Dorsolateral prefrontal cortex (tissue), 120 donors: ENCODE measurements at regions of chrX and their contacts with region 1.

Region 1: GRCh38 chrX:135003876-135004623 is 13.3 kb downstream of the SMIM10 start:
- DNase-seq: peak; percentile 80 to 93 (median 90)
- H3K4me3 ChIP-seq: peak overlapping the region; percentile 25 to 73 (median 57)
- H3K27ac ChIP-seq: peak overlapping the region in 26 of 59 donors; percentile 1 to 76 (median 43)
- H3K27me3 ChIP-seq: peaks cover 0 to 73% (median 10%) of the 10 kb centered on the region in 45 donors
- CTCF ChIP-seq: peak in 4 of 56 donors; percentile 9 to 24 (median 19)

Region 2: GRCh38 chrX:134969726-134970125 is 34.3 kb before region 1 on chrX:
- intact Hi-C with region 1: loop called (anchors 2 to 5 kb)
- DNase-seq: no peak
- H3K4me3 ChIP-seq: no peak overlapping the region
- H3K27ac ChIP-seq: no peak overlapping the region
- H3K27me3 ChIP-seq: peaks cover 0 to 41% (median 7%) of the 10 kb centered on the region in 45 donors
- CTCF ChIP-seq: no peak

Region 3: GRCh38 chrX:135024526-135024925 is 20.5 kb after region 1 on chrX:
- intact Hi-C with region 1: loop called in 1 of 2 experiments (anchors 1 kb)
- DNase-seq: no peak
- H3K4me3 ChIP-seq: no peak overlapping the region
- H3K27ac ChIP-seq: no peak overlapping the region
- H3K27me3 ChIP-seq: peaks cover 0 to 43% (median 5%) of the 10 kb centered on the region in 45 donors
- CTCF ChIP-seq: no peak

Region 4: GRCh38 chrX:135050603-135051002 is 46.6 kb after region 1 on chrX:
- intact Hi-C with region 1: loop called in 1 of 2 experiments (anchors 5 kb)
- DNase-seq: no peak
- H3K4me3 ChIP-seq: peak overlapping the region in 57 of 59 donors; percentile 49 to 76 (median 63)
- H3K27ac ChIP-seq: peak overlapping the region in 9 of 59 donors; percentile 43 to 86 (median 77)
- H3K27me3 ChIP-seq: peaks cover 0 to 45% (median 12%) of the 10 kb centered on the region in 45 donors
- CTCF ChIP-seq: no peak

Region 5: DNA sequence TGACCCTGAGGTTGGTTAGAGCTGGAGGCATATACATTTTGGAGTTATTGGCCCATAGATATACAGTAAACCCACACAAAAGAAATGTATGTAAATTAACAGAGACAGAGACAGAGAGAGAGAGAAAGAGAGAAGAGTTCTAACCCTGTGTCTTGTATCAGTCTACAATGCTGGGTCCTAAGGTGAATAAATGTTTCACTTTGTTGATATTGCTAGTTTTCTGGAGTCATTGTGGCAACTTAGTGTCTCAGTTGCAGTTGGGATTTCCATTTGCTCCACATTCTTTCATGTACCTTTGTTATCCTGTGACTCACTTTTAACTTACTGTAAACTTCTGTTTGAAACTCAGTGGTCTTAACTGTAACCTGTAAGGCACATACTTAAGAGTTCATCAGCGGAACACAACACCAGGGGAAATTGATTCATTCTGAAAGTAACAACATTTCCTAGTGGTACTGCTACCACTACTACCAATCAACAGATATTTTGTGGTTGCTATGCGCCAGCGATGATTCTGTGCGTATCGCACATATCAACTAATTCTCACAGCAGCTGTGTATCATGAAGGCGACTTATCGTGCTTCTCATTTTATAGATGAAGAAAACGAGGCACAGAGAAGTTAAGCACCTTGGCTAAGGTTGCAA is 209.3 kb after region 1 on chrX:
- intact Hi-C with region 1: no loop called
- DNase-seq: no peak
- H3K4me3 ChIP-seq: no peak overlapping the region
- H3K27ac ChIP-seq: no peak overlapping the region
- H3K27me3 ChIP-seq: peaks cover 0 to 46% (median 8%) of the 10 kb centered on the region in 45 donors
- CTCF ChIP-seq: no peak

Region 6: DNA sequence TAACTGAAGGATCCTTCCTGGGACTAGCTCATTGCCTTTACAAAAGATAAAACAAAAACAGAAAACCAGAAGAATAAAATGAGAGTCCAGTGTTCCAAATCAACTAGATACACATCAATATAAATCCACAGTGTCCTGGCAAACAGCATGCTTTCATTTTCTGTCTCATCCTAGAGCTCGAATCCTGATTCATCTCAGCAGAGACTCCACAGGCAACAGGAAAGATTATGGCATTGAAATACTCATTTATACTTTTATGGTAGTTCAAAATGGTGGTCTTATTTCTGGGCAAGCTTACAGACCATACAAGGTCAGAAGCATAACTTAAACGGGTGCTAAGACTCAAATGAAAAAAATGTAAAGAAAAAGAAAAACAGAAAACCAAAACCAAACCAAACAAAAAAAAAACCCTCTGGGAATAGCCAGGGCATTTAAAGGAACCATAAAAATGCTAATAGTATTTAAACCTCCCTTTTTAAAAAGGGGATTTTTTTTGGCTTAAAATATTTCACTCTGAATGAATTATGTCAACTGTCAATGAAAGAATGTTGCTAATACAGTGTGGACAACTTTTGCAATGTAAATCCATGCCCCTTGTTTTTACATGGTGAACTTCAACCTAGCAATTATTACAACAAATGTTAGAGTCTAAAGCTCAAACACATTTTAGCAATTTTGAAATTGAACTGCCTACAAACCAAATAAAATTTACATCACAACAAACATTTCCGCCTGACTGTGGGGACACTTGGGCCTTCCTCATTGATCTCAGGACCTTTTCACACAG is 1971.8 kb after region 1 on chrX:
- intact Hi-C with region 1: no loop called
- DNase-seq: no peak
- H3K4me3 ChIP-seq: no peak overlapping the region
- H3K27ac ChIP-seq: no peak overlapping the region
- H3K27me3 ChIP-seq: peaks cover 0 to 20% (median 0%) of the 10 kb centered on the region in 45 donors
- CTCF ChIP-seq: no peak